Endothelial cell of umbilical vein (primary cell): ENCODE measurements at regions of chrX and their contacts with region 1.

Region 1: DNA sequence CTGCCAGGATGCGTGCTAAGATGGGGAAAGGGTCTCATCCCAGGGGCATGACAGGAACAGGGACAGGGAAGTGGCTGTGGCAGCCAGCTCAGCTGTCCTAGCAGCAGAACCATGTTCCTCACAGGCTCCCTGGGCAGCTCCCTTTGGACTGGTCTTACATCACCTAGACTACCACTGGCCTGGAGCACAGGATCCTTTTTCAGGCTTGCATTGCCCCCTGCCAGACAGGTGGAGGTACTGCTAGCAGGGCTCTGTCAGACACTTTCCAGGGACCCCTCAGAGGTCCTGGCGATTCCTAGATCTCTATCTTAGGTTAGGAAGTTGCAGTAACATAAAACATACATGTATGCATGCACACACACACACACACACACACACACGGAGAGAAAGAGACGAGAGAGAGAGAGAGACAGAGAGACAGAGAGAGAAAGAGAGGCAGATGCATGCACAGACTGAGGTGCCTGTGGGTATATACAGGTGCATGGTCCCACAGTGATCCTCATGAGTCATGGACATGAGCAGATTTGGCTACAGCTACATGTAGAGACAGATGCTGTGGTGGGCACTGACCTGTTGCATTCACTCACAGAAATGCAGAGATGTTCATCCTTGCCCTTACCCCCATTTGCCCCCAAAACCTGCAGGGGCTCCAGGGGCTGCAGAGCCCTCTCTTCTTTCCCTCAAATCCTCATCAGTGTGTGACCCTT is 63.6 kb downstream of the STARD8 start:
- DNase-seq: peak; percentile 32
- H3K4me3 ChIP-seq: no peak overlapping the region
- H3K27ac ChIP-seq: no peak overlapping the region
- H3K4me1 ChIP-seq: no peaks in the 10 kb centered on the region
- H3K27me3 ChIP-seq: no peaks in the 10 kb centered on the region
- CTCF ChIP-seq: peak; percentile 45 to 48
- POLR2A ChIP-seq: no peak

Region 2: DNA sequence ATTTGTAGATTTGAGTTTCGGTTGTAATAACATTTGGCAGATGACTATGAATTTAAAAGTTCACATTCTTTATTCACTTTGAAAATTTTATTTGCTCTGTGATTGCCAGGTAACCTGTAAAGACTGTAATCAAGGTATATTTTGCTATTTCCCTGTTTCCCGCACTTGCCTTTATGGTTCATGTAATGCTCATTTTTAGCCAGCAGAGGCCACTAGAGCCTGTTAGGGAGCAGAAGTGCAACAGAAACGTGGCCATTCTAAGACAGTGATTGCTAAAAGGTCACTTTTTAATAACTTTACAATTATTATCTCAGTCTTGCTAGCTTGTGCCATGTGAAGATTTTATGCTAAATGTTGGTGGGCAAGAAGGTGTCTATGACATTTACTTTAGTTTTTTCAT is 199.8 kb before region 1 on chrX:
- CTCF ChIA-PET with region 1: interaction called, 29 read pairs
- POLR2A ChIA-PET with region 1: no interaction called
- dilution Hi-C with region 1: no loop called
- intact Hi-C with region 1: loop called (anchors 1 kb)
- DNase-seq: peak; percentile 42
- H3K4me3 ChIP-seq: no peak overlapping the region
- H3K27ac ChIP-seq: no peak overlapping the region
- H3K4me1 ChIP-seq: no peaks in the 10 kb centered on the region
- H3K27me3 ChIP-seq: no peaks in the 10 kb centered on the region
- CTCF ChIP-seq: peak; percentile 41 to 46
- POLR2A ChIP-seq: no peak

Region 3: GRCh38 chrX:68599251-68600152 is 111.5 kb before region 1 on chrX:
- CTCF ChIA-PET with region 1: interaction called, 21 read pairs
- POLR2A ChIA-PET with region 1: no interaction called
- dilution Hi-C with region 1: no loop called
- intact Hi-C with region 1: loop called (anchors 1 kb)
- DNase-seq: peak; percentile 9
- H3K4me3 ChIP-seq: no peak overlapping the region
- H3K27ac ChIP-seq: no peak overlapping the region
- H3K4me1 ChIP-seq: no peaks in the 10 kb centered on the region
- H3K27me3 ChIP-seq: no peaks in the 10 kb centered on the region
- CTCF ChIP-seq: peak; percentile 28 to 49
- POLR2A ChIP-seq: no peak

Region 4: GRCh38 chrX:68665502-68665901 is 45.5 kb before region 1 on chrX:
- CTCF ChIA-PET with region 1: no interaction called
- POLR2A ChIA-PET with region 1: no interaction called
- dilution Hi-C with region 1: no loop called
- intact Hi-C with region 1: no loop called
- DNase-seq: no peak
- H3K4me3 ChIP-seq: no peak overlapping the region
- H3K27ac ChIP-seq: no peak overlapping the region
- H3K4me1 ChIP-seq: no peaks in the 10 kb centered on the region
- H3K27me3 ChIP-seq: no peaks in the 10 kb centered on the region
- CTCF ChIP-seq: no peak
- POLR2A ChIP-seq: no peak

Region 5: GRCh38 chrX:68686097-68686977 is 24.7 kb before region 1 on chrX:
- CTCF ChIA-PET with region 1: interaction called, 14 read pairs
- POLR2A ChIA-PET with region 1: no interaction called
- dilution Hi-C with region 1: no loop called
- intact Hi-C with region 1: no loop called
- DNase-seq: peak; percentile 61
- H3K4me3 ChIP-seq: peak overlapping the region in 1 of 3 experiments; percentile 35
- H3K27ac ChIP-seq: peak overlapping the region; percentile 36
- H3K4me1 ChIP-seq: peaks cover 28% of the 10 kb centered on the region
- H3K27me3 ChIP-seq: no peaks in the 10 kb centered on the region
- CTCF ChIP-seq: no peak
- POLR2A ChIP-seq: peak; percentile 46